Left ventricle myocardium superior (tissue), 1 donor: ENCODE measurements at regions of chr2 and their contacts with region 1.

Region 1: GRCh38 chr2:24827321-24828237 is 34.4 kb downstream of the CENPO start:
- DNase-seq: peak; percentile 80
- ATAC-seq: peak; percentile 93

Region 2: DNA sequence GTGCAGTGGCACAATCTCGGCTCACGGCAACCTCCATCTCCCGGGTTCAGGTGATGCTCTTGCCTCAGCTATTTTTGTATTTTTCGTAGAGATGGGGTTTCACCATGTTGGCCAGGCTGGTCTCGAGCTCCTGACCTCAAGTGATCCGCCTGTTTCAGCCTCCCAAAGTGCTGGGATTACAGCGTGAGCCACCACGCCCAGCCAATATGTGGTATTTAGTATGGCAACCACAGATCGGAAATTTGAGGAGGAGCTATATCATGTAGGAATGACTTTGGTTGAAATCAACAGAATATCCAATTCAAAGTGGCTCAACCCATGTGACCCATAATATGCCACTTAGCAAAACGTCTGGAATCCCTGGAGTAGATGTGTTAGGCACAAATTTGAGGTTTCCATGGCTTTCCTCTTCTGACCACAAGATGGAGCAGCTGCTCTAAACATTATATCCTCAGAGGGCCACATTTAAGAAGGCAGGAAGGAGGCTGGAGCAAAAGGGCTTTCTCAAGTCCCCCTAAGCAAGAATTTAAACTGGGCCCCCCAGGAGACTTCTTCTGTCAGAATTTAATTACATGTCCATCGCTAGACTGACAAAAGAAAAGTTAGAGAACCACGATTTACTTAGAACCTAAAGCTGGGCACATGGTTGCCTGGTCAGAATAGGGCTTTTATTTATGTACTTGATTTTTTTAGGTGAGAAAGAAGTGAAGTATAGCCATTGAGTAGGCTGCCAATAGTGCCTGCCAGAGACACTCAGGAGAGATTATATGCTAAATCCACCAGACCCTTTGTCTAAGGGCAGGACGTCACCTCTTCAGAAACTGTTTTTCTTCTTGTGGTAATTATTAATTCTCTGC is 417.7 kb before region 1 on chr2:
- intact Hi-C with region 1: loop called (anchors 5 kb)
- DNase-seq: no peak
- ATAC-seq: peak; percentile 82

Region 3: DNA sequence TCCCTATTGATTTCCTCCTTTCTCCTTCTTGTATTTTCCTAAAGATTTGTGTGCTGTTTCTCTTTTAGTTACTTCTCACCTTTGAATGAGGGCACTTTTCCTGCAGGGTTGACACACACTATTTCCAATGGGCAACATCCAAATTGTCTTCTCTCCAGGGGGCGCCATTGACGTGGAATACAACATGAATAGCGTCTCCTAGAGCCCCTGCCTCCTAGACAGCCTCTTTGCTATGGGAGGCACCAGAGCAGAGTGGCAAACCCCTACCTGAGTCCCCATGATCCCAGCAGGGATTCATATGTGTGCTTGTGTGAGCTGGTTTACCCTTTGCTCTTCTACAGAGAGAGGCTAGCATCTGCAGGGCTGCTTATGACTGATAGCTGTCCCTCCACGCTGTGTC is 405.9 kb before region 1 on chr2:
- intact Hi-C with region 1: loop called (anchors 5 kb)
- DNase-seq: peak; percentile 60
- ATAC-seq: peak; percentile 83

Region 4: DNA sequence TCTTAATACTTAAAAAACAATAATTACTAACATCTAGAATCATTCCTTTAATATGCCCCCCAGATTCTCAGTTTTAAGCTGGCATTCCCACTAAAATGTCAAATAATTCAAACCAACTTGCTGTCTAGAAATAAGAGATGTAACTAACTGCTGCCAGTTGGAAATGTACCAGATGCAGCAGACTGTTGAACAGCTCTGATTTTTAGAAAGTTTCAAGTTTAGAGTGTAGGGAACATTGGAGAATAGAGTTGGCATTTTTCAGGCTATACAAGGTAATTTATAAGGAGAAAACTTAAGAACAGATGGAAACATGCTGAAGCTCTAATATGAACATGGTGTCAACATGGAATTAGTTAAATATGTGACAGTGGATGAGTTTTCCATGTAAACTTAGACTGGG is 135.8 kb before region 1 on chr2:
- intact Hi-C with region 1: no loop called
- DNase-seq: no peak
- ATAC-seq: no peak

Region 5: GRCh38 chr2:24909555-24910177 is 82.1 kb after region 1 on chr2:
- intact Hi-C with region 1: no loop called
- DNase-seq: no peak
- ATAC-seq: no peak